ENCODE measurements at regions of chr9 and their contacts with region 1.

Region 1: GRCh38 chr9:120755827-120756434 is 37.3 kb downstream of the FBXW2 start:
- DNase-seq: peak; percentile 50
- H3K4me3 Mint-ChIP-seq: no peak overlapping the region
- H3K27ac Mint-ChIP-seq: no peak overlapping the region
- H3K4me1 Mint-ChIP-seq: peaks cover 10% of the 10 kb centered on the region
- H3K27me3 Mint-ChIP-seq: no peaks in the 10 kb centered on the region

Region 2: GRCh38 chr9:120477521-120478001 is 278.4 kb before region 1 on chr9:
- intact Hi-C with region 1: no loop called
- DNase-seq: peak; percentile 11
- H3K4me3 Mint-ChIP-seq: no peak overlapping the region
- H3K27ac Mint-ChIP-seq: no peak overlapping the region
- H3K4me1 Mint-ChIP-seq: peaks cover 14% of the 10 kb centered on the region
- H3K27me3 Mint-ChIP-seq: no peaks in the 10 kb centered on the region

Region 3: DNA sequence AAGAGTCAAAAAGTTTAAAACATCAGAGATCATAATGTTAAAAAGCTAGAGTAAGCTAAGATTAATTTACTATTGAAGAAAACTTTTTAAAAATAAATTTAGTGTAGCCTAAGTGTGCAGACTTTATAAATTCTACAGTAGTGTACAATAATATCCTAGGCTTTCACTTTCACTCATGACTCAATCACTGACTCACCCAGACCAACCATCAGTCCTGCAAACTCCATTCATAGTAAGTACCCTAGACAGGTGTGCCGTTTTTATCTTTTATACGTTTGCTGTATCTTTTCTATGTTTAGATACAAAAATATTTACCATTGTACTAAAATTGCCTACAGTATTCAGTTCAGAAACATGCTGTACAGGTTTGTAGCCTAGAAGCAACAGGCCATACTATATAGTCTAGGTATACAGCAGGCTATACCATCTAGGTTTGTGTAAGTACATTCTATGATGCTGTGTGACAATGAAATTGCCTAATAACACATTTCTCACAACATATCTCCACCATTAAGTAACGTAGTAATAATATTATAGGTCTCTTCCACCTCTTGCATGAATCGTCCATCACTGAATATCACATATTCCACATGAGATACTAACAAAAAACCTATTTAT is 100.8 kb before region 1 on chr9:
- intact Hi-C with region 1: no loop called
- DNase-seq: no peak
- H3K4me3 Mint-ChIP-seq: no peak overlapping the region
- H3K27ac Mint-ChIP-seq: no peak overlapping the region
- H3K4me1 Mint-ChIP-seq: peaks cover 9% of the 10 kb centered on the region
- H3K27me3 Mint-ChIP-seq: no peaks in the 10 kb centered on the region

Region 4: DNA sequence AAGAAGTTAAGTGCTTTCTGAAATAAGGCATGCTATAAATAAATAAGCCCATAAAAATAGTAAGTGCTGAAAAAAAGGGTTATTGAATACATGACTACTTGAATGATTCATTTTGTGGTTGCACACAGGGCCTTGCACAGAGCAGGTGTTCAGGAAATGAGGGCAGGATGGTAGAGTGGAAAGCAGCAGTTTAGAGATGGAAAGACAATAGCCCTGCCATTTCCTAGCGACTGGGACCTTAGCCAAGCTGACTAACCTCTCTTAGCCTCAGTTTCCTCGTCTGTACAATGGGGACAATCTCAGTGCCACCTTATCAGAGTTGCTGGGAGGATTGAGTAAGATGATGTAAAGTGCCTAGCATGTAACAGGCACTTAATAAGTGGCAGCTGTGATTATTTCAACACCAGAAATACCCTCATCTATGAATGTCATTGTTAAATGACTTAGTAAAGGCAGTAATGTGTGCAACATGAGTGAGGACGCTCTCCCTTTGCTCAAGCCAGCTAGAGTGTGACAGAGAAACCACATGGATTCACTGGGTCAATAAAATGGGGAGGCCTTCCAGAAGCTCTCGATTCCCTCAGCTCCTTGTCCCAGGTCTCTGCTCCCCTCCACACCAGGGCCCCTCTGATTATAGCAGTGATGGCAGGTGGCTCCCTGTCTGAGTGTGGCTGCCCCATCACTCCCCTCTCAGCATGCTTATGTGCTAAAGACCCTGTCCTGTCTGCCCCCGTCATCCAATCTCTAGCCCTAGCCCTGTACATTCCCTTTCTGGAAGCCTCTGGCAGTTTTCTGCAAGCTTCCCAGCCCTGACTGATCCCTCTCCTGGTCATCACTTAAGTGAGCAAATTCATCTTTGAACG is 137.0 kb after region 1 on chr9:
- intact Hi-C with region 1: loop called (anchors 5 kb)
- DNase-seq: peak; percentile 66
- H3K4me3 Mint-ChIP-seq: peak overlapping the region; percentile 71
- H3K27ac Mint-ChIP-seq: peak overlapping the region; percentile 100
- H3K4me1 Mint-ChIP-seq: peaks cover 75% of the 10 kb centered on the region
- H3K27me3 Mint-ChIP-seq: no peaks in the 10 kb centered on the region

Region 5: GRCh38 chr9:120936011-120936763 is 180.3 kb after region 1 on chr9:
- intact Hi-C with region 1: loop called (anchors 1 kb)
- DNase-seq: peak; percentile 75
- H3K4me3 Mint-ChIP-seq: peak overlapping the region; percentile 52
- H3K27ac Mint-ChIP-seq: peak overlapping the region; percentile 80
- H3K4me1 Mint-ChIP-seq: peaks cover 55% of the 10 kb centered on the region
- H3K27me3 Mint-ChIP-seq: peaks cover 2% of the 10 kb centered on the region

Region 6: DNA sequence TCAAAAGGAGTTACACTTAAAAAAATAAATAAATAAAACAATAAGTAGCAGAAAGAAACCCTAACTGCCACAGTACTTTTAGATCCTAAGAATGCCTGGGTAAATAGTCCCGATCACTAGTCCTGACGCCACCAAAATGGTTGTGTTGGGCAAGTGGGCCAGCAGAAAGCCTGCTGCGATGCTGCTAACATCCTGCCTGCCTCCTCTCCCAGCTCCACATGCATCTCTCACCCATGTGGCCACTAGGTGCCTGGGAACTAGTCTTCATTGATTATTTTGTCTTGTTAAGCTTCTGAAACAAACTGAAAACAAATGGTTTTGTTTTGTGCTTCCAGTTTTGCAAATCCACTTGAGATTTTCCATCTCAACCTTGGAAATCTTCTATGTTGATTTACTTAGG is 225.0 kb after region 1 on chr9:
- intact Hi-C with region 1: loop called (anchors 2 kb)
- DNase-seq: no peak
- H3K4me3 Mint-ChIP-seq: no peak overlapping the region
- H3K27ac Mint-ChIP-seq: no peak overlapping the region
- H3K4me1 Mint-ChIP-seq: peaks cover 2% of the 10 kb centered on the region
- H3K27me3 Mint-ChIP-seq: peaks cover 19% of the 10 kb centered on the region

Region 7: GRCh38 chr9:121059998-121060636 is 304.2 kb after region 1 on chr9:
- intact Hi-C with region 1: loop called (anchors 1 kb)
- DNase-seq: no peak
- H3K4me3 Mint-ChIP-seq: no peak overlapping the region
- H3K27ac Mint-ChIP-seq: no peak overlapping the region
- H3K4me1 Mint-ChIP-seq: peaks cover 15% of the 10 kb centered on the region
- H3K27me3 Mint-ChIP-seq: peaks cover 2% of the 10 kb centered on the region

Region 8: GRCh38 chr9:121074635-121075385 is 318.9 kb after region 1 on chr9 and contains the start of gene CNTRL:
- intact Hi-C with region 1: loop called (anchors 5 kb)
- DNase-seq: peak; percentile 90
- H3K4me3 Mint-ChIP-seq: peak within 1 kb of the TSS; percentile 100
- H3K27ac Mint-ChIP-seq: peak within 1 kb of the TSS; percentile 98
- H3K4me1 Mint-ChIP-seq: peaks cover 34% of the 10 kb centered on the region
- H3K27me3 Mint-ChIP-seq: no peaks in the 10 kb centered on the region
- total RNA-seq, gene CNTRL: 67.6 and 68.4 TPM in 2 replicates